Activated B cell treated with CpG ODN at 0.5 μM for 24 hours (primary cell): ENCODE measurements at regions of chr17 and their contacts with region 1.

Region 1: GRCh38 chr17:2029911-2030778 is at the start of gene DPH1:
- DNase-seq: peak; percentile 80
- ATAC-seq: peak; percentile 78
- H3K4me3 Mint-ChIP-seq: peak within 1 kb of the TSS; percentile 96
- H3K27ac Mint-ChIP-seq: peak within 1 kb of the TSS; percentile 83
- H3K4me1 Mint-ChIP-seq: peaks cover 40% of the 10 kb centered on the region
- H3K27me3 Mint-ChIP-seq: peaks cover 25% of the 10 kb centered on the region
- CTCF ChIP-seq: no peak
- total RNA-seq, gene DPH1: 49.3 and 63.4 TPM in 2 replicates

Region 2: GRCh38 chr17:1908699-1909309 is 121.3 kb before region 1 on chr17:
- CTCF ChIA-PET with region 1: no interaction called
- POLR2A ChIA-PET with region 1: no interaction called
- intact Hi-C with region 1: loop called (anchors 5 kb)
- DNase-seq: no peak
- ATAC-seq: peak; percentile 71
- H3K4me3 Mint-ChIP-seq: peak overlapping the region; percentile 67
- H3K27ac Mint-ChIP-seq: no peak overlapping the region
- H3K4me1 Mint-ChIP-seq: peaks cover 30% of the 10 kb centered on the region
- H3K27me3 Mint-ChIP-seq: peaks cover 51% of the 10 kb centered on the region
- CTCF ChIP-seq: no peak

Region 3: DNA sequence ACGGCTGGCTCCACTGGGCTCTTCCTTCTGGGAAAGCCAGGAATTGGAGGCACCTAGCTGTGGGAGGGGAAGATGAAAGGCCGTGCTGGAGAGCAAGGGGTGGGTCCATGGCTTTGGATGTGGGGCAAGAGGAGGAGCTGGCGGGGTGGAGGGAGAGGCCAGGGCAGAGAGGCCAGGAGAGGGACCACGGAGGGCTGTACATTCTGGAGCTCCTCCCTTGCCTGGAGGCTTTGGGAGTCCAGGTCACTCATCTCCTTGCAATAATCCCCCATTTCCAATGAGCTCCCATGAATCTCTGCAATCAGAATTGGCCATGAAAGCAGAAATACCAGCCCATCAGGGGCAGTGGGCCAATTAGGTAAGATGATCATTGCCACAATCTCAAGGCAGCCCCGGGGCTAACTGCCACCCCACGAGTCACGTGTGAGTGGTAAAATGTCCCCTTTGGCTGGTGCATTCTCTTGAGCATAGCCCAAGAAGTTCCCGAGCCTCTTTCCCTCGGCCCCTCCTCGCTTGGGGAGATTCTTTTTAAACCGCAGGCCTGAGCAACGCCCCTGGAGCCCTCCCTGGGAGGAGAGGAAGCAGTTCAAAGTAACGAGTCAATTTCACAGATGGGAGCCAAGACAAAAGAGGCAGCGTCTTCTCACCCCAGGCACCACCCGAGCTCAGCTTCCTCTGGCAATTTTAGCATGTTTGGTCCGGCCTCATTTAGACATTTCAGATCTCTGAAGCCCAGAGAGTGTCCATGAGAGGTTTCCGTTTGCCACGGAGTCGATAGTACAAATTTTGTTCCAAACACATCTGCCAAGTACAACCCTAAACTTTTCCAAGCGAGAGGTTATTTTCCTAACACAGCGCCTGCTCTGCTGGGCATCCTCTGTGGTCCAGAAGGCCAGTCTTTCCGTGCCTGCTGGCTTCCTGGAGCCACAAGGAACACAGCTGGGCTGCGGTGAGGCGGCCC is 18.5 kb before region 1 on chr17:
- CTCF ChIA-PET with region 1: no interaction called
- POLR2A ChIA-PET with region 1: no interaction called
- intact Hi-C with region 1: no loop called
- DNase-seq: no peak
- ATAC-seq: no peak
- H3K4me3 Mint-ChIP-seq: no peak overlapping the region
- H3K27ac Mint-ChIP-seq: no peak overlapping the region
- H3K4me1 Mint-ChIP-seq: no peaks in the 10 kb centered on the region
- H3K27me3 Mint-ChIP-seq: peaks cover 30% of the 10 kb centered on the region
- CTCF ChIP-seq: no peak

Region 4: GRCh38 chr17:2064980-2065785 is 35.0 kb after region 1 on chr17:
- CTCF ChIA-PET with region 1: no interaction called
- POLR2A ChIA-PET with region 1: no interaction called
- intact Hi-C with region 1: no loop called
- DNase-seq: no peak
- ATAC-seq: no peak
- H3K4me3 Mint-ChIP-seq: peak overlapping the region; percentile 67
- H3K27ac Mint-ChIP-seq: peak overlapping the region; percentile 16
- H3K4me1 Mint-ChIP-seq: peaks cover 46% of the 10 kb centered on the region
- H3K27me3 Mint-ChIP-seq: no peaks in the 10 kb centered on the region
- CTCF ChIP-seq: no peak